ENCODE measurements at regions of chr12 and their contacts with region 1.

Region 1: GRCh38 chr12:104286538-104287482 is 16.7 kb upstream of the EID3 start:
- DNase-seq: peak; percentile 95
- ATAC-seq: peak; percentile 91

Region 2: DNA sequence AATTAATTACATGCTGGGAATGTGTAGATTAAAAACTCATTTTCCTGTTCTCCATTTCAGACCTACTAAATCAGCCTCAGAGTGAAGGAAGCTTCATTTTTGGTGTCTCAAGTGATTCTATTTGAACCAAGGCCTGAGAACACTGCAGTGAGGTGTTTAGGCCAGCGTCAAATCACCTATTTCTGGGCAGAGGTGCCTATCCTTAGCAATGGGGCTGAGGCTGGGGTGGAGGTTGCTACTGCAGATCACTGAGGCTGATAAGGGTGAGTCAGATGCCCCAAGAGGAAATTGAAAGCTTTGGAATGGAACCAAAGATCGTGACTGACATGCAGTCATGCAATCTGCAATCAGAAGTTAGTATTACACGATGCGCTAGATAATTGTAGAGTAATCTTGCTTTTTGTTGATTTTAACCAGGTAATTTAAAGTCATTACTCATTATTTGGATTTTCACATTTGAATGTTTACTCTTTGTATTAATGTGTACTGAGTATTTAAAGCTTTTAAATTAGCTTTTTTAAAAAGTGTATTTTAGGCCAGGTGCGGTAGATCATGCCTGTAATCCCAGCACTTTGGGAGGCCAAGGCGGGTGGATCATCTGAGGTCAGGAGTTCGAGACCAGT is 66.8 kb before region 1 on chr12:
- intact Hi-C with region 1: loop called (anchors 2 kb)
- DNase-seq: no peak
- ATAC-seq: peak; percentile 9

Region 3: GRCh38 chr12:104546575-104546974 is 259.8 kb after region 1 on chr12:
- intact Hi-C with region 1: no loop called
- DNase-seq: no peak
- ATAC-seq: peak; percentile 78

Measured in left ventricle myocardium superior (tissue), 1 donor.